Cardiac septum (tissue), 1 donor: ENCODE measurements at regions of chr5 and their contacts with region 1.

Region 1: DNA sequence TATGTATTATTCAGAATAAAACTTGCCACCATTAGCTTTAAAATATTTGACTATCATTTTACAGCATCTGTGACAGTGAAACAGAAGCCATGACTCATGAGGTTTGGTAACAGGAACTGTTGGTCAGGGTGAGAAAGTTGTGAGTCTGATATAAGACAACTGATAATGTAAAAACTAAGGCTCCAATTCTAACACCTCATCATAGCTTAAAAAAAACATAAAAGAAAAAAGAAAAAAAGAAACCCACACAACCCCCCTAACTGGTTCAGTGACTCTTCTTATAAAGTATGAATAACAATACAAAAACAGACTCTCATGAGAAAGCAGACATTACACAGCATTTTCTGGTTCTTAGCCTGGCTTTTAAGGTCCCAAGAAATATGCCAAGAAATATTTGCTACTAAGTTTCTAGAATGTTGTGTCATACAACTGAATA is 85.8 kb downstream of the MRPS27 start:
- DNase-seq: no peak

Region 2: GRCh38 chr5:71982717-71983395 is 251.4 kb before region 1 on chr5:
- intact Hi-C with region 1: no loop called
- DNase-seq: no peak

Region 3: GRCh38 chr5:72141440-72142355 is 92.6 kb before region 1 on chr5:
- intact Hi-C with region 1: loop called (anchors 5 kb)
- DNase-seq: no peak

Region 4: GRCh38 chr5:72194846-72195245 is 39.4 kb before region 1 on chr5:
- intact Hi-C with region 1: loop called (anchors 5 kb)
- DNase-seq: no peak

Region 5: DNA sequence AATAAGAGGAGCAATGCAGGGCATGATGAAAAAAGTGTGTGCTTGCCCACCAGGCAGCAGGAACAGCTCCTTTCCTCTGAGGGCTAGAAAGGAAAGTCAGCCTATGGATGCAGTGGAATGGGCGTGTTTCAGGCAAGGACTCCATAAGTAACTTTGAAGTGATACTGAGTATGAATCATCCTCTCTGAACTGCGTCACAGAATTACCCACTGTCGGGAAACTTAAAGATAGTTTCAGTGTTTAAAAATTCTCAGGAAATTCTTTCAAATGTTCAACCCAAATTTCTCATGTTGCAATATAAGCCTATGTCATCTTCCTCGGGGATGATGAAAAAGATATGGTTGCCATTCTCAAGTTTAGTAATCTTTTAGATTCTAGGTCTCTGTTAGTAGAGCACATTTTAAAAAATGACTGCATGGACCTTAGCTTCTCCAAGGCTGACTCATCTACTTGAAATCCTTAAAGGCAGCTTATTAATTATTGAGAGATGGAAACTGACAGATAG is 113.6 kb after region 1 on chr5:
- intact Hi-C with region 1: no loop called
- DNase-seq: no peak

Region 6: GRCh38 chr5:72597456-72597948 is 363.2 kb after region 1 on chr5:
- intact Hi-C with region 1: no loop called
- DNase-seq: no peak